Breast epithelium (tissue), 4 donors: ENCODE measurements at regions of chr3 and their contacts with region 1.

Region 1: DNA sequence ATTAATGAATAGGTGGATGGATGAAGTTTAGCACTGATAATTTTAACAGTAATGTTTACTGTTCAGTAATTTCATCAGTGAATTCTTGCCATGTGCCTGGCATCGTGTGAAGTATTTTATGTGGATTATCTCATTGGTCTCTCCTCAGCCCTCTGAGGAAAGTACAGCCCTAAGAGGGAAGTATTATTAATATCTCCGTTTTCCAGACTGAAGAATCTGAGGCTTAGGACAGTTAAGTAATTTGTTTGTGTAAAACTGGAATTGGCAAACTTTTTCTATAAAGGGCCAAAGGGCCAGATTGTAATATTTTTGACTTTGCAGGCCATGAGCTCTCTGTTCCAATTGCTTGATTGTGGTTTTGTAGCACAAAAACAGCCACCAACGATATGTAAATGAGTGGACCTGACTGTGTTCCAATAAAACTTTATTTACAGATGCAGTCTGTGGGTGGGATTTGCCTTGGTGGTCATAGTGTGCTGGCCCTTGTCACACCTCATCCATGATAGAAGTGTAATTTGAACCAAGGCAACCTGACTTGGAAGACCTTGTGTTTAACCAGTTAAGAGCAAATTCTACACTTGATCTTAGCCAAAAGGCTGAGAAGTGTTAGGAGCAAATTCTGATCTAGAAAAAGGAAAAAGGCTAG is 255.3 kb downstream of the FEZF2 start:
- DNase-seq: no peak
- H3K4me3 ChIP-seq: no peak overlapping the region
- H3K27ac ChIP-seq: peak overlapping the region in 1 of 2 donors; percentile 2
- H3K4me1 ChIP-seq: no peaks in the 10 kb centered on the region
- H3K27me3 ChIP-seq: no peaks in the 10 kb centered on the region
- CTCF ChIP-seq: no peak
- POLR2A ChIP-seq: no peak

Region 2: DNA sequence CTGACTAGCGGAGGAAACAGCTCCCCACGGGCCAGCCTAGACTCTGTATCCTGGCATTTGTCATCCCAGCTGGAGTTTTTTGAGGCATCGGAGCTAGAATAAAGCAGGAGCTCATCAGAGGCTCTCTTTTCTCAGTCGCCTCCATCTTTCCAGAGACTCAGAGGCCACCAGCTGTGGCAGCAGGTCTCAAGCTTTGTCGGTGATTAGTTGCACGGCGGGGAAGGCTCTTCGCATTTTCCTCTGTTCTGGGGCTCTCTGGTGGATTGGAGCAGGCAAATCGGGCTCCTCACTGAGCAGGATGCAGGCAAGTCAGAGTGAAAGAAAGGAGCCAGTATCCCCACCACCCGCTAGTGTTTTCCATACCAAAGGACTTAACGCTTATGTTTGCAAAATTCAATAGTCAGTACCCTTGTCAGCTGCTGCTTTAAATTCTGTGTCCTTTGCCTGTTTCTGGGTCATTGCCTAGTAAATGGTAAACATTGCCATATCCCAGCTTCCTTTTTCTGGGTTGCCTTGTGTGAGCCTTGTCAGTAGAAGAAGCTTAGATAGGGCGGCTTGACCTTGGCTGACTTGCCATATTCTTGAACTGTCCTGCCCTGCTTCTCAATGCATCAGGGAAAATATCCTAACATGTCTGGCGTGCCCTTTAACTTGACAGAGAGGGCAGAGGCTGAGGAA is 429.6 kb before region 1 on chr3:
- intact Hi-C with region 1: no loop called
- DNase-seq: no peak
- H3K4me3 ChIP-seq: no peak overlapping the region
- H3K27ac ChIP-seq: no peak overlapping the region
- H3K4me1 ChIP-seq: peaks cover 0 to 6% of the 10 kb centered on the region in 2 donors
- H3K27me3 ChIP-seq: no peaks in the 10 kb centered on the region
- CTCF ChIP-seq: no peak
- POLR2A ChIP-seq: no peak

Region 3: DNA sequence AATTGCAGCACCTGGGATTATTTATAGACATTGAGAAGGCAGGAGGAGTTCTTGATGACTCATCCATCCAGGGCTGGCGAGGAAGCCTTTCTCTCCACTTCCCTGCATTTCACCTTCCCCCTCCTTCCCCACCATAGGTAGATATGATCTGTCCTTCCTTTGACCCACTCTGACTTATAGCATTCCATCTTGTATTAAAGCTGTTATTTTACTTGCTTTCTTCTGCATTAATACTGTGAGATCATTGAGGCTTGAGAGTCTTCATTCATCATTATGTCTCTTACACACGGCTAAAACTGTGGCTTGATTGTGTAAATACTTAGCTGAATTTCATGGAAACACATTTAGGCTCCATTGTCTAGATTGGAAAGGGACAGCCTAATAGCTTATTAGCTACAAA is 33.4 kb before region 1 on chr3:
- intact Hi-C with region 1: loop called (anchors 2 kb)
- DNase-seq: no peak
- H3K4me3 ChIP-seq: no peak overlapping the region
- H3K27ac ChIP-seq: no peak overlapping the region
- H3K4me1 ChIP-seq: no peaks in the 10 kb centered on the region
- H3K27me3 ChIP-seq: no peaks in the 10 kb centered on the region
- CTCF ChIP-seq: no peak
- POLR2A ChIP-seq: no peak

Region 4: DNA sequence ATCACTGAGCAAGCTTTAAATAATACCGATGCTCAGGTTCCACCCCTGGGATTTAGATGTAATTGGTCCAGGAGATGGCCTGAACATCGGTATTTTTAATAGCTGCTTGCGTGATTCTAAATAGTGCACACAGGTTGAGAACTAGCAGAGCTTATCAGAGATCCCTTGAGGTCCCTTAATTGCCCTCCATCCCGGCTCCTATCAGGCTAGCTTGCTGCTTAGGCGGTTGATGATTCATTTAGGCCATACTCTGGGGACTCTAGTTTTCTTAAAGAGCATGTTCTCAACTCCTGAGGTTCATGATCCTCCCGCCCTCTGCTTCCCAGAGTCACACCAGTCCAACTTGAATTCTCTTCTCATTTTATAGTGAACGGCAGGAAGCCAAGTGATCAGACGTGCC is 25.0 kb before region 1 on chr3:
- intact Hi-C with region 1: loop called (anchors 1 kb)
- DNase-seq: no peak
- H3K4me3 ChIP-seq: no peak overlapping the region
- H3K27ac ChIP-seq: no peak overlapping the region
- H3K4me1 ChIP-seq: no peaks in the 10 kb centered on the region
- H3K27me3 ChIP-seq: no peaks in the 10 kb centered on the region
- CTCF ChIP-seq: no peak
- POLR2A ChIP-seq: no peak